H1 (cell line): ENCODE measurements at regions of chr13 and their contacts with region 1.

Region 1: GRCh38 chr13:59318320-59318930 is 845.3 kb downstream of the DIAPH3 start:
- DNase-seq: peak; percentile 34 to 90
- H3K4me3 ChIP-seq: no peak overlapping the region
- H3K27ac ChIP-seq: no peak overlapping the region
- H3K4me1 ChIP-seq: peaks cover 0 to 4% (median 0%) of the 10 kb centered on the region in 4 experiments; a peak in 2 of 7 replicates
- H3K27me3 ChIP-seq: no peaks in the 10 kb centered on the region
- CTCF ChIP-seq: peak in 2 of 3 experiments; percentile 68 to 78; a peak in 3 of 4 replicates
- EP300 ChIP-seq: no peak
- POLR2A ChIP-seq: no peak
- RAD21 ChIP-seq: peak; percentile 72 to 74

Region 2: GRCh38 chr13:59178344-59178743 is 140.1 kb before region 1 on chr13:
- CTCF ChIA-PET with region 1: no interaction called
- POLR2A ChIA-PET with region 1: no interaction called
- DNase-seq: no peak
- H3K4me3 ChIP-seq: no peak overlapping the region
- H3K27ac ChIP-seq: no peak overlapping the region
- H3K4me1 ChIP-seq: no peaks in the 10 kb centered on the region
- H3K27me3 ChIP-seq: no peaks in the 10 kb centered on the region
- CTCF ChIP-seq: peak in 2 of 3 experiments; percentile 12 to 40; a peak in 2 of 4 replicates
- EP300 ChIP-seq: no peak
- POLR2A ChIP-seq: no peak
- RAD21 ChIP-seq: peak; percentile 40 to 47; a peak in 3 of 4 replicates

Region 3: GRCh38 chr13:59303433-59303832 is 15.0 kb before region 1 on chr13:
- CTCF ChIA-PET with region 1: interaction called, 19 read pairs
- POLR2A ChIA-PET with region 1: no interaction called
- DNase-seq: no peak
- H3K4me3 ChIP-seq: no peak overlapping the region
- H3K27ac ChIP-seq: no peak overlapping the region
- H3K4me1 ChIP-seq: no peaks in the 10 kb centered on the region
- H3K27me3 ChIP-seq: no peaks in the 10 kb centered on the region
- CTCF ChIP-seq: no peak
- EP300 ChIP-seq: no peak
- POLR2A ChIP-seq: no peak
- RAD21 ChIP-seq: no peak

Region 4: GRCh38 chr13:59330764-59331163 is 12.3 kb after region 1 on chr13:
- CTCF ChIA-PET with region 1: interaction called, 18 read pairs
- POLR2A ChIA-PET with region 1: no interaction called
- DNase-seq: no peak
- H3K4me3 ChIP-seq: no peak overlapping the region
- H3K27ac ChIP-seq: no peak overlapping the region
- H3K4me1 ChIP-seq: no peaks in the 10 kb centered on the region
- H3K27me3 ChIP-seq: no peaks in the 10 kb centered on the region
- CTCF ChIP-seq: no peak
- EP300 ChIP-seq: no peak
- POLR2A ChIP-seq: no peak
- RAD21 ChIP-seq: no peak